HEK293 (cell line): ENCODE measurements at regions of chr6 and their contacts with region 1.

Region 1: DNA sequence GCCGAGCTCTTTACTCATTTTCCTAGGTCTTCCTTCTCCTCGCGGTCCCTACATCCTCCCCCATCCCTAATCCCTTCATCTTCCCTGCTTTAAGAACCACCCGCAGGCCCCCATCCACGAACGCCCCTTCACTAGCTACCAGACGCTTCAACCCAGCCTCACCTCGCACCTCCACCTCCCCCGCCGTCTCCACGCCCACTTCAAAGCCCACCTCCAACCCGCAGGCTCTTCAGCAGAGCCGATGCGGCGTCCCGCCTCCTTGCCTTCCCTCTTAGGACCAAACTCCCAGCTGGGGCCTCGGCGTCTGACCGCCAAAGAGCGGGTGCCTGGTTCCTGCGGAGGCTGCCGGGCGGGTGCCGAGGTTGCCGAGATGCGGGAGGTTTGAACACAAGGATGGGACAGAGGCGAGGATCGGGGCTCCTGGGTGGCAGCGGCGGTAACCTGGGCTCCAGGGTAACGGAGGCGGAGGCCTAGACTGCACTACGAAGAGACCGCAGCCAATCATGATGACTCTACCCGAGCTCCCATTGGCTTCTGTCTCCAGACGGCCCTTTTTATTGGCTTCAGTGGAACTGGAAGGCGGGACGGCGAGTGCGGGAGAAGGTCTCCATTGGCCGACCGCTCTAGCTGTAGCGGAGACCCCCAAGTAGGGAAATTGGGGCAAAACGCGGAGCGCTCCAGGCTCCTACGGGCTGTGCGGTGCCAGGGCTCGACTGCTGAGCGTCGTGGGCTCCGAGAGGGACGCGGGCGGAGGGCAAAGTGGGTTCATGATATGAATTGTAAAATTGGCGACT is at the start of gene LCA5:
- H3K4me3 ChIP-seq: peak within 1 kb of the TSS; percentile 97
- H3K27ac ChIP-seq: peak within 1 kb of the TSS; percentile 75
- H3K4me1 ChIP-seq: no peaks in the 10 kb centered on the region
- CTCF ChIP-seq: no peak

Region 2: DNA sequence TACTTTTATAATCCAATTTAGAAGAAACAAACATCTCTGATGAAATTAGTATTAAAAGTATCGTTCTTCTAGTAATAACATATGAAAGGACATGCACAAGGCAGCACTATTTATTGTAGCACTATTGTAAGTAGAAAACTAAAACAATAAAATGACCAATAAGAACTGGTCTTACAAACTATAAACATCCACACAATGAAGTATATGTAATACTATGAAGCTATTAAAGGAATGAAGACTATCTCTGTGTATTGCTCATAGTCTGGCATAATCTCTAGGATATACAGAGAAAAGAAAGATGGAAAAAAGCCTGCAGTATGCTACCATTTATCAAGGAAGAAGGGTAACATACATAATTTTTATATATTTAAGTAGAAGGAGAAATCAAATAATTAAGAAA is 16.6 kb before region 1 on chr6:
- CTCF ChIA-PET with region 1: no interaction called
- POLR2A ChIA-PET with region 1: no interaction called
- H3K4me3 ChIP-seq: no peak overlapping the region
- H3K27ac ChIP-seq: no peak overlapping the region
- H3K4me1 ChIP-seq: no peaks in the 10 kb centered on the region
- CTCF ChIP-seq: no peak

Region 3: GRCh38 chr6:79557673-79558467 is 20.7 kb after region 1 on chr6:
- CTCF ChIA-PET with region 1: no interaction called
- POLR2A ChIA-PET with region 1: no interaction called
- H3K4me3 ChIP-seq: no peak overlapping the region
- H3K27ac ChIP-seq: no peak overlapping the region
- H3K4me1 ChIP-seq: no peaks in the 10 kb centered on the region
- CTCF ChIP-seq: no peak

Region 4: GRCh38 chr6:79574636-79575225 is 37.6 kb after region 1 on chr6:
- CTCF ChIA-PET with region 1: no interaction called
- POLR2A ChIA-PET with region 1: no interaction called
- H3K4me3 ChIP-seq: no peak overlapping the region
- H3K27ac ChIP-seq: no peak overlapping the region
- H3K4me1 ChIP-seq: no peaks in the 10 kb centered on the region
- CTCF ChIP-seq: no peak

Region 5: GRCh38 chr6:79630883-79631692 is 93.9 kb after region 1 on chr6 and contains the start of gene SH3BGRL2:
- CTCF ChIA-PET with region 1: no interaction called
- POLR2A ChIA-PET with region 1: interaction called, 15 read pairs
- H3K4me3 ChIP-seq: peak within 1 kb of the TSS; percentile 77
- H3K27ac ChIP-seq: peak within 1 kb of the TSS; percentile 65; the same call in 1 of the 2 replicates
- H3K4me1 ChIP-seq: peaks cover 4% of the 10 kb centered on the region
- CTCF ChIP-seq: peak; percentile 33; the same call in 1 of the 2 replicates